Activated T-helper 1 cell treated with anti-CD3 and anti-CD28 coated beads, Interleukin-12 subunit alpha, Interleukin-12 subunit beta, Interleukin-2, Interleukin-4 antibody, amounts not matched to agents 30 ng/mL and 10 ng/mL and 1 ng/mL, durations not matched to agents 14 hours and 24 hours and 36 hours (primary cell): ENCODE measurements at regions of chr10 and their contacts with region 1.

Region 1: GRCh38 chr10:28302638-28303488 is at the start of gene MPP7:
- DNase-seq: peak; percentile 93
- H3K4me3 Mint-ChIP-seq: peak within 1 kb of the TSS; percentile 85
- H3K27ac Mint-ChIP-seq: peak within 1 kb of the TSS; percentile 41
- H3K4me1 Mint-ChIP-seq: peaks cover 32% of the 10 kb centered on the region
- H3K27me3 Mint-ChIP-seq: peaks cover 34% of the 10 kb centered on the region
- total RNA-seq, gene MPP7: 0.15 and 0.29 TPM in 2 replicates

Region 2: DNA sequence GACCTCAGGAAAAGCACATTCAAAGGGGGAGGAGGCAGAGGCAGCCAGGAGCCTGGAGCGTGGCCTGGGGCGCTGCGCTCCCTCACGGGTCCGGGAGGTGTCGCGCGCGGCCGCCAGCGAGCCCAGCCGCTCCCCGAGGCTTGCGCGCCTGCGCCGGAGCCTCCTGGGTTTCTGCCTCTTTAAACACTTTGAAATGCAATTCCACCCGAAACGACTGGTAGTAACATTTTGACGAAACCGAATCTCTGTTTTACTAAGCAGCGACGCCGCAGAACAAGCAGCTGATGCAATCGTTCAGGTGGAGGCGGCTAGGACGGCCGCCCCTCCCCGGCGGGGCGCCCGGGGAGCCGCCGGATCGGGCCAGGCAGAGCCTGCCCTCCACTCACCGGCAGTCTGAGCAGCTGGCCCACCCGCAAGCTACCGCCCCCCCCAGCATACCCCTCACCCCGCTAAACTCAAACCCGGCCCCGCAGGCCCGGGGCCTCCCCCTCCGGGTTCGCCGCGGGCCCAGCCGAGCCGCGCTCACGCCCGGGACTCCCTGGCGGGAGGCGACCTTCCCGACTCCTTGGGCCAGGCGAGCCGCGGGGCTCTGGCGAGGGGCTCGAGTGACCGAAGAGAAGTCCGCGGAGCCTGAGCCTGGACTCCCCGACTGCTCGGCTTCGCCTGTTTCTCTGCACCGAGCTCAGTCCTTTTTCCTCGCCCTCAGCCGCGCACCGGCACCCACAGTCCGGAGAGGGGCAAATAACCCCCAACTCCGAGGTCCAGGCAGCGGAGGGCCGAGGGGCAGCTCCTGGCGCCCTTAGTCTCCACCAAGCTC is 560.5 kb before region 1 on chr10:
- intact Hi-C with region 1: loop called (anchors 2 kb)
- DNase-seq: peak; percentile 73
- H3K4me3 Mint-ChIP-seq: peak overlapping the region; percentile 65
- H3K27ac Mint-ChIP-seq: no peak overlapping the region
- H3K4me1 Mint-ChIP-seq: peaks cover 34% of the 10 kb centered on the region
- H3K27me3 Mint-ChIP-seq: peaks cover 63% of the 10 kb centered on the region

Region 3: GRCh38 chr10:28328346-28328745 is 25.5 kb after region 1 on chr10:
- intact Hi-C with region 1: loop called (anchors 1 kb)
- DNase-seq: no peak
- H3K4me3 Mint-ChIP-seq: no peak overlapping the region
- H3K27ac Mint-ChIP-seq: no peak overlapping the region
- H3K4me1 Mint-ChIP-seq: peaks cover 27% of the 10 kb centered on the region
- H3K27me3 Mint-ChIP-seq: peaks cover 7% of the 10 kb centered on the region

Region 4: DNA sequence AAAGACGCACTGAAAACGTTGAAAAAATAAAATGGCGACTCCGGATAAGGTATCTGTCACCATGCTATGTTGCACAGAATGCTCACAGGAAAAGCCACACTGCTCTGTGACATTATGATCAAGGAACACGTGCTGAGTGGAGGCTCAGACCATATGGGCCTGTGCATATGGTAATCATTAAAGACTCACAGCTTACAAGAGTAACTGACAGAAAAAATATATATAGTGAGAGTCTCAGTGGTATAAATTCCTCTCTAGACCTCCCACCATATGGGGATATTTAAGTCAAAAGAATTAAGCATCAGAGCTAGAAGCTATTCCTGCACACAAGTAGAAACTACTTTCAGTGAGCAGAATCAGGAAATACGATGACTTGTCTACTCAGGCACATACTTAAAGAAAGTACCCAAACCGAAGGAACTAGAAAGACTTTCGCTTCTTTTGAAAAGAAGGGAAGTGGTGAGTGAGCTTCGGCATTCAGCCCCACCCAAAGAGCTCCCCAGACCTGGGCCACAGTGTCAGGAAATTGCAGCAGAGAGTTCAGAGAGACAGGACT is 65.1 kb after region 1 on chr10:
- intact Hi-C with region 1: loop called (anchors 1 kb)
- DNase-seq: peak; percentile 62
- H3K4me3 Mint-ChIP-seq: peak overlapping the region; percentile 75
- H3K27ac Mint-ChIP-seq: peak overlapping the region; percentile 93
- H3K4me1 Mint-ChIP-seq: peaks cover 27% of the 10 kb centered on the region
- H3K27me3 Mint-ChIP-seq: peaks cover 9% of the 10 kb centered on the region

Region 5: DNA sequence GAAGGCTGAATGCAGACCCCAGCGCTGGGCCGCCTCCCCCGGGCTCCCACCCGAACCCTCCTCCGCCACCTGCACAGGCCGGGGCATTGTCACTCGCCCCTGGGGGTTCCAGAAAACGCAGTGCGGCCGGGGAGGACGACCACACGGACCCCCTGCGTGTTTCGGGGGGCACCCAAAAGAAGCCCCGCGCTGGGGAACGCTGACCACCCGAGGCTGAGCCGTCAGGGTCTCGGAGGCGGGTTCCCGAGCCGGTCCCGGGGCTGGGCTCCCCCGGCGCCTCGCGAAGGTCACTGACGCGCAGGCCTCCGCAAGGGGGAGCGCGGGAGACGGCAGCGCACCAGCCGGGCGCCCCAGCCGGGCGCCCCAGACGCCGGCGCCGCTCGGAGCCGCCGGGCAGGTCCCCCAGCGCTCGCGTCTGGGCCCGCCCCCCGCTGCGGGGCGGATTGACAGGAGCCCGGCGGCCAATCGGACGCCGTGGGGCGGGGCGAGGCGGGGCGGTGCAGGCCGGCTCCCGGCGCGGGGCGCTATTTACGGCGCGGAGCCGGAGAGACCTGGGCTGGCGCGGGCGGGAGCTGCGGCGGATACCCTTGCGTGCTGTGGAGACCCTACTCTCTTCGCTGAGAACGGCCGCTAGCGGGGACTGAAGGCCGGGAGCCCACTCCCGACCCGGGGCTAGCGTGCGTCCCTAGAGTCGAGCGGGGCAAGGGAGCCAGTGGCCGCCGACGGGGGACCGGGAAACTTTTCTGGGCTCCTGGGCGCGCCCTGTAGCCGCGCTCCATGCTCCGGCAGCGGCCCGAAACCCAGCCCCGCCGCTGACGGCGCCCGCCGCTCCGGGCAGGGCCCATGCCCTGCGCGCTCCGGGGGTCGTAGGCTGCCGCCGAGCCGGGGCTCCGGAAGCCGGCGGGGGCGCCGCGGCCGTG is 374.4 kb after region 1 on chr10 and contains the start of gene BAMBI:
- intact Hi-C with region 1: loop called (anchors 5 kb)
- DNase-seq: peak; percentile 90
- H3K4me3 Mint-ChIP-seq: peak within 1 kb of the TSS; percentile 82
- H3K27ac Mint-ChIP-seq: no peak within 1 kb of the TSS
- H3K4me1 Mint-ChIP-seq: peaks cover 27% of the 10 kb centered on the region
- H3K27me3 Mint-ChIP-seq: peaks cover 78% of the 10 kb centered on the region
- total RNA-seq, gene BAMBI: 0.23 and 0.81 TPM in 2 replicates

Region 6: GRCh38 chr10:29022473-29022872 is 719.6 kb after region 1 on chr10:
- intact Hi-C with region 1: no loop called
- DNase-seq: no peak
- H3K4me3 Mint-ChIP-seq: no peak overlapping the region
- H3K27ac Mint-ChIP-seq: no peak overlapping the region
- H3K4me1 Mint-ChIP-seq: no peaks in the 10 kb centered on the region
- H3K27me3 Mint-ChIP-seq: peaks cover 5% of the 10 kb centered on the region